ENCODE measurements at regions of chr16 and their contacts with region 1.

Region 1: DNA sequence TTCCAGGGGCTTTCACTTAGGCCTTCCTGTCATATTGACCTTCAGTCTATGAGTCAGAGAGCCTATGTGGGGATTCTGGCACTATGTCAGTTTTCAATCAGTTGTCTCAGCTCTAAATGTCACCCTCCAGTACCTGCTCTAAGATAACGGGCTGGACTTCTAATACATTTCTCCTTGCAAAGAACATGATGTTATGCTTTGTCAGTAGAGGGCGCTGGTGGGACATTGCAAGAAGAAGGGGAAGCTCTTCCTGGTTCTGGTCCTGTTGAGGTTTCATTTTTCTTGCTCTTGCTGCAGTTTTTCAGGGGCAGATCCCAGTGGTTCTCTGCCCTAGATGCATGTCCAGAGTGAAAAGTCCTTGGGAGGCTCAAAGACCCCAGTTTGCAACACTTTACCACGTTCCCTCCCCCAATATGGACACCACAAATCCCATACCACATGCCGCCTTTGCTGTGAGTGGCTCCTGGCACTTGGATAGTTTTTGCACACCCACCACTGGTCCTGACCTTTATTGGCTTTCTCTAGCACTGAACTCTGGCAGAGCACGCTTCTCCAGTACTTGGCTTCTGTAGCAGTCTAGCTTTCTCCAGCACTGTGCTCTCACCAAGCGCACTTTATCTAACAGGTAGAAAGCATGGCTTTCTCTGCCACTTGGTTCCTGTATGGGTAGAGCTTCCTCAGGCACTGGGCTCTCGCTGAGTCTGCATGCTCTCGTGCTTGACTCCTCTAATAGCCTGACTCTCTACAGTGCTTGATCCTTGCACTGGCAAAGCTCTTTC is 49.0 kb downstream of the BCL7C start:
- DNase-seq: peak; percentile 84
- H3K4me3 Mint-ChIP-seq: peak overlapping the region; percentile 46
- H3K27ac Mint-ChIP-seq: peak overlapping the region; percentile 53
- H3K4me1 Mint-ChIP-seq: peaks cover 10% of the 10 kb centered on the region
- H3K27me3 Mint-ChIP-seq: no peaks in the 10 kb centered on the region

Region 2: GRCh38 chr16:30813821-30814189 is 31.1 kb before region 1 on chr16:
- CTCF ChIA-PET with region 1: interaction called, 20 read pairs
- POLR2A ChIA-PET with region 1: interaction called, 3 read pairs
- DNase-seq: no peak
- H3K4me3 Mint-ChIP-seq: peak overlapping the region; percentile 74
- H3K27ac Mint-ChIP-seq: peak overlapping the region; percentile 78
- H3K4me1 Mint-ChIP-seq: peaks cover 13% of the 10 kb centered on the region
- H3K27me3 Mint-ChIP-seq: no peaks in the 10 kb centered on the region

Region 3: GRCh38 chr16:30867747-30868146 is 22.9 kb after region 1 on chr16:
- CTCF ChIA-PET with region 1: interaction called, 18 read pairs
- POLR2A ChIA-PET with region 1: interaction called, 3 read pairs
- DNase-seq: no peak
- H3K4me3 Mint-ChIP-seq: no peak overlapping the region
- H3K27ac Mint-ChIP-seq: no peak overlapping the region
- H3K4me1 Mint-ChIP-seq: peaks cover 7% of the 10 kb centered on the region
- H3K27me3 Mint-ChIP-seq: no peaks in the 10 kb centered on the region

Region 4: DNA sequence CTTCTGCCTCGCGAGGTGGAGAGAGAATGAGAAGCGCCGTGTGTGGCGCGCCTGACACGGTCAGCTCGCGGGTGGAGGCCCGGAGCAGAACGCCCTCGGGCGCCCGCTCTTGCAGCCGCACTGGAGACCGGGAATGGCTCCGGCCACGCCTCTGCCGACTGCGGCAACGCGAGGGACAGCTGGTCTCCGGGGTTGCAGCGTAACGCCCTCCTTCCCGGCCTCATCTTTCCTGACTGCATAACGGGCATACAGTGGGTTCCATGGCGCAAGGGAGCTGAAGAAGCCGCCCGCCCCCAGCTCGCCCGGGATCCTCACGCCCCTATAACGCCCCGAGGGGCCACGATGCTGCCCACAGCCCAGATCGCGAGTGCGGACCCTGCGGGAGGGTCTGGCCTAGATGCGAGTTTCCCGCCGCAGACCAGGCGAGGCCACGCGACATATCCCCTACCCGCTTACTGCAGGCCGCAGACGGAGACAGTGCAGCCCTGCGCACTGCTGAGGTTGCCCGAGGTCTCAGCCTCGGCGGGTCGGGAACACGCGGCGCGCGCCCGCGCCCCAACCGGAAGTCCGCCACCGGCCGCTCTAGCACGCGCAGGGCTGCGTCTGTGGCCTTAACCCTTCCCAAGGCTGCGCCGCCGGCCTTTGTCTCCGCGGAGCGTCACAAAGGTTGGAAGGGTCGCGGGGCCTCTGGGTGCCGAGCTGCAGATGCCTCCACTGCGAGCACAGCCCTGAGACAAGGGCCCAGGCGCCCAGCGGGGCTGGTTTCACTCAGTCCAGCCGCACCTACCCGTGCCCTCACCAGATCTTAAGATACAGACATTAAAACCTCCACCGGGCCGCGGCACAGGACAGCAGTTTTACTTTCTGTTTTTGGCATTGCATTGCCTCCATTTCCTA is 30.2 kb after region 1 on chr16:
- CTCF ChIA-PET with region 1: interaction called, 20 read pairs
- POLR2A ChIA-PET with region 1: interaction called, 33 read pairs
- DNase-seq: peak; percentile 90
- H3K4me3 Mint-ChIP-seq: peak overlapping the region; percentile 93
- H3K27ac Mint-ChIP-seq: peak overlapping the region; percentile 75
- H3K4me1 Mint-ChIP-seq: peaks cover 40% of the 10 kb centered on the region
- H3K27me3 Mint-ChIP-seq: no peaks in the 10 kb centered on the region

Region 5: DNA sequence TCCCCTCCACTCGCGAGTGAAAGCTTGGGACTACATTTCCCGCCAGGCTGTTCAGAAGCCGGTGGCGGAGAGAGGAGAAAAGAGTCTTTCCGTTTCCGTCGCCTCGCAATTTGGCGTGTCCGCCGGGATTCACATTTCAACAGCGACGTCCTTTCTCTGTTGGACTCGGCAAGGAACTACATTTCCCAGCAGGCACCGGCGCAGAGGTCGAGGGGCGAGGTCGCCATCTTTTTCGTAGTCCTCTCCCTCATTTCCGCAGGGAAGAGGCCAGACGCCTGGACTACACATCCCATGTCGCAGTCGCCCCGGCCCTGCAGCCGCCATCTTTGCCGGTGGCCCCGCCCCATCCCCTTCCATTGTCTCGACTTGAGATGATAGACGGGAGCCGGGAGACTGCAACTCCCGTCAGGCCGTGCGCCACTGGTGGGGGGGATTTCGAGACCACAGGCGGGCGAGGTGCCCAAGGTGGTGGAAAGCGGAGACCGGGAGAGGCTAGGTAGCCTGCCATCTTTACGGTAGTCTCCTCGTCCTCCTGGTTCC is 77.6 kb after region 1 on chr16:
- CTCF ChIA-PET with region 1: interaction called, 59 read pairs
- POLR2A ChIA-PET with region 1: interaction called, 11 read pairs
- DNase-seq: peak; percentile 100
- H3K4me3 Mint-ChIP-seq: peak overlapping the region; percentile 98
- H3K27ac Mint-ChIP-seq: peak overlapping the region; percentile 98
- H3K4me1 Mint-ChIP-seq: peaks cover 25% of the 10 kb centered on the region
- H3K27me3 Mint-ChIP-seq: no peaks in the 10 kb centered on the region

Region 6: GRCh38 chr16:30934827-30935557 is 90.1 kb after region 1 on chr16:
- CTCF ChIA-PET with region 1: interaction called, 94 read pairs
- POLR2A ChIA-PET with region 1: interaction called, 3 read pairs
- DNase-seq: peak; percentile 57
- H3K4me3 Mint-ChIP-seq: no peak overlapping the region
- H3K27ac Mint-ChIP-seq: peak overlapping the region; percentile 60
- H3K4me1 Mint-ChIP-seq: peaks cover 25% of the 10 kb centered on the region
- H3K27me3 Mint-ChIP-seq: no peaks in the 10 kb centered on the region

Region 7: GRCh38 chr16:30941600-30942425 is 97.0 kb after region 1 on chr16:
- CTCF ChIA-PET with region 1: interaction called, 94 read pairs
- POLR2A ChIA-PET with region 1: interaction called, 7 read pairs
- DNase-seq: peak; percentile 81
- H3K4me3 Mint-ChIP-seq: peak overlapping the region; percentile 64
- H3K27ac Mint-ChIP-seq: peak overlapping the region; percentile 68
- H3K4me1 Mint-ChIP-seq: peaks cover 38% of the 10 kb centered on the region
- H3K27me3 Mint-ChIP-seq: no peaks in the 10 kb centered on the region